Heart left ventricle (tissue), 16 donors: ENCODE measurements at regions of chr10 and their contacts with region 1.

Region 1: DNA sequence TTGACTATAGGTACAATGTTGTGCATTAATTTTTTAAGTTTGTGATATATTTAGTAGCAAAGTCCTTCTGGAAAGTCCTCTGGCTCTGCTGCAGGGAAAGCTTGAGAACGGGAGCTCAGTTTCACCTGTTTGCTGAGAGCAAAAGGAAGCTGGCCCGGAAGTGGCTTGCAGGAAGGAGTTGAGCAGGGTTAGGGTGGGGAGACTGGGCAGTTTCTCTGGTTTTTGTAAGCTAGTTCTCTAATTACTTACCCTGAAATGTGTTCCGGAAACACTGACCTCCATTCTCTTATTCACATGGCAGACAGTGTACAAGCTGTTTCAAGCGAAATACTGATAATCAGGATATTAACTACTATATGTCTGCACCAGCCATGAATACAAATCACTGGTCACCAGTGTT is 22.3 kb downstream of the MAP3K8 start:
- DNase-seq: peak in 2 of 5 donors; percentile 30 to 38
- ATAC-seq: peak; percentile 19 to 41 (median 21)
- H3K4me3 ChIP-seq: peak overlapping the region in 1 of 12 donors; percentile 12
- H3K27ac ChIP-seq: peak overlapping the region; percentile 22 to 88 (median 74)
- H3K4me1 ChIP-seq: peaks cover 16 to 80% (median 34%) of the 10 kb centered on the region in 12 donors
- H3K27me3 ChIP-seq: peaks cover 0 to 7% (median 0%) of the 10 kb centered on the region in 9 donors
- CTCF ChIP-seq: no peak
- POLR2A ChIP-seq: no peak

Region 2: GRCh38 chr10:30294479-30295240 is 161.6 kb before region 1 on chr10:
- intact Hi-C with region 1: no loop called
- DNase-seq: no peak
- ATAC-seq: no peak
- H3K4me3 ChIP-seq: no peak overlapping the region
- H3K27ac ChIP-seq: no peak overlapping the region
- H3K4me1 ChIP-seq: no peaks in the 10 kb centered on the region
- H3K27me3 ChIP-seq: no peaks in the 10 kb centered on the region
- CTCF ChIP-seq: no peak
- POLR2A ChIP-seq: no peak

Region 3: DNA sequence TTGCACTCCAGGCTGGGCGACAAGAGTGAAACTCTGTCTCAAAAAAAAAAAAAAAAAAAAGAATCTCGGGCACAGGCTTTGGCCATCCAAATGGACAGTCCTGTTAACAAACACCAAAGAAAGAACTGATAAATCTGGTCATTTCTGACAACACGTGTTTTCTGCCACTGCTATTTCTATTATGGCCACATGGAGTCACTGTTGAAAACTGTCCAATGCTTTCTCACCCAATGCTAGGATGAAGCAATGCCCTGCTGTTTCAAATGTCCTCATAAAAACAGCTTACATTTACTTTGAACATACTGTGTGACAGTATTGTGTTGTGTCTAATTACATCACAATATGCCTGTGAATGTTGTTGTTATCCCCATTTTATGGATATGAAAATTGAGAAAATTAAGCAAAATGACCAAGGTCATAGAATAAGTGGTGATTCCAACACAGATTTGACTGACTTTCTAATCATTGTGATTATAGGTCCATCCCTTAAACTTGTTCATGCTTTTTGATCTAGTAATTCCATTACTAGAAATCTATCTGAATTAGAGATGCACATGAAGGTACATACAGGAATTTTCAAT is 42.2 kb before region 1 on chr10:
- intact Hi-C with region 1: loop called in 1 of 10 experiments (anchors 5 kb)
- DNase-seq: no peak
- ATAC-seq: peak; percentile 53 to 83 (median 74)
- H3K4me3 ChIP-seq: no peak overlapping the region
- H3K27ac ChIP-seq: no peak overlapping the region
- H3K4me1 ChIP-seq: peaks cover 0 to 24% (median 0%) of the 10 kb centered on the region in 12 donors
- H3K27me3 ChIP-seq: no peaks in the 10 kb centered on the region
- CTCF ChIP-seq: peak; percentile 72 to 86 (median 76)
- POLR2A ChIP-seq: no peak

Region 4: GRCh38 chr10:30433730-30434272 is 22.5 kb before region 1 on chr10 and contains the start of gene MAP3K8:
- intact Hi-C with region 1: loop called in 2 of 10 experiments (anchors 2 kb)
- DNase-seq: peak; percentile 93 to 97 (median 94)
- ATAC-seq: peak; percentile 84 to 92 (median 90)
- H3K4me3 ChIP-seq: peak within 1 kb of the TSS; percentile 73 to 97 (median 91)
- H3K27ac ChIP-seq: peak within 1 kb of the TSS; percentile 96 to 100 (median 99)
- H3K4me1 ChIP-seq: peaks cover 0 to 62% (median 48%) of the 10 kb centered on the region in 12 donors
- H3K27me3 ChIP-seq: no peaks in the 10 kb centered on the region
- CTCF ChIP-seq: no peak
- POLR2A ChIP-seq: peak in 1 of 2 donors; percentile 79
- total RNA-seq, gene MAP3K8: 4.2 to 39.0 (median 5.8) TPM

Region 5: DNA sequence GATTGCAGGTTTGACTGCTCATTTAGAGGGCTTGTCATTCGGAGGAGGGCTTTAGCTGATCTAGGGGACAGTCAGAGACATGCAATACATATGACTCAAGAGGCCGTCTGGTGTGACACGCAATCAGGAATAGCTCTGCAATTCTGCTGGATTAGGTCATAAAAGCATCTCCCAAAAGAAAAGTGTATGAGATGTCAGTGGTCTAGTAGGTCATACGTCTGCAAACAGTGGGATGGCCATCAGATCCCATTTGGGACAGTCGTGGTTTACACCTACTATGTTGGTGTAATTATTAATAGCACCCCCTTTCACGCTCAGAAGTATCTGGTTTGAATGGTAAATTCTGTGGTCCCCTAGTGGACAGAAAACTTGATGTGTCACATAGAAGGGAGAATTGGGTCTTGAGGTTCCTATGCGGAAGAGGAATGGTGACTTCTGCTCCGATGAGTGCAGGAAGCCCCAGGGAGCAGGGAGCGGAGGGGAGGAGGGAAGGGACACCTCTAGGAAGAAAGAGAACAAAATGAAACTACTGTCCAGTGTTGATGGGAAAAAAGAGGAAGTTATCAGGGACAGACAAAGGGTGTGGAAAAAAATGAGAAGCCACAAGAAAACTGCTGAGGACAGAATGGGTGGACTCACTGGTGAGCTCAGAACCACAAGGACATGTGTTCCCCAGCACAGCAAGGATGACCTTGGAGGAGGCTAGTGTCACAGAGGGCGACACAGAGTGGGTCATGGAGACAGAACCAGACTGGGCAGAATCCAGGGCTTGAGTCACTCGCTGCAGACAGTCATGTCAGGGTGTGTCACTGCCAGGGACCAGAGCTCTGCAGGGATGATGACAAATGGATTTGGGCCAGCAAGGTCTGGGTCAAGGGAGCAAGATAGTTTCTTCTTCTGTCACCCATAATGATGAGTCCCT is 37.6 kb after region 1 on chr10:
- intact Hi-C with region 1: no loop called
- DNase-seq: peak in 4 of 5 donors; percentile 32 to 61 (median 46)
- ATAC-seq: peak; percentile 81 to 87 (median 84)
- H3K4me3 ChIP-seq: no peak overlapping the region
- H3K27ac ChIP-seq: peak overlapping the region in 1 of 12 donors; percentile 80
- H3K4me1 ChIP-seq: peaks cover 0 to 79% (median 0%) of the 10 kb centered on the region in 12 donors
- H3K27me3 ChIP-seq: no peaks in the 10 kb centered on the region
- CTCF ChIP-seq: peak in 1 of 12 donors; percentile 9
- POLR2A ChIP-seq: no peak

Region 6: GRCh38 chr10:31090894-31091607 is 634.8 kb after region 1 on chr10:
- intact Hi-C with region 1: no loop called
- DNase-seq: no peak
- ATAC-seq: peak; percentile 32 to 57 (median 44)
- H3K4me3 ChIP-seq: no peak overlapping the region
- H3K27ac ChIP-seq: peak overlapping the region in 1 of 12 donors; percentile 21
- H3K4me1 ChIP-seq: peaks cover 0 to 3% (median 0%) of the 10 kb centered on the region in 12 donors
- H3K27me3 ChIP-seq: no peaks in the 10 kb centered on the region
- CTCF ChIP-seq: no peak
- POLR2A ChIP-seq: no peak